A673 (cell line): ENCODE measurements at regions of chr13 and their contacts with region 1.

Region 1: DNA sequence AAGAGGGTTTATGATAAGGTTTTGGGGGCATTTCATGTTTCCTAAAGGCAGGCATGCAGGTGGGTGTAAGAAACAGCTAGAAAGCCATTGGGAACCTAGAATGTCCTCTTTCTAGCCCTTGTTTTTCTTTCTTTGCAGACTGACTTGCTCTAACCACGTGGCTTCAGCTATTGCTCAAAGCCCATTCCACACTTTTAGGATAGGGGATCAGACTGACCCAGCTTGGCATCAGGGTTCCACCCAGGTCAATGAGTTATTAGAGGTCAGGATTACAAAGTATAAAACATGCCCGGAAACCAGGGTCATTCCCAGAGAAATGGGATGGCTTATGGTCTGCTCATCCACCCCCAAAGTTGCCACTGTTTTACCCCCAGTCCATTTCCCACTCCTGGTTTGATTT is 16.8 kb downstream of the PHF11 start:
- DNase-seq: no peak
- H3K4me3 ChIP-seq: no peak overlapping the region
- H3K27ac ChIP-seq: no peak overlapping the region
- H3K4me1 ChIP-seq: no peaks in the 10 kb centered on the region
- H3K27me3 ChIP-seq: no peaks in the 10 kb centered on the region
- CTCF ChIP-seq: no peak

Region 2: GRCh38 chr13:49374585-49375290 is 137.8 kb before region 1 on chr13:
- CTCF ChIA-PET with region 1: no interaction called
- POLR2A ChIA-PET with region 1: no interaction called
- intact Hi-C with region 1: no loop called
- DNase-seq: peak; percentile 34
- H3K4me3 ChIP-seq: no peak overlapping the region
- H3K27ac ChIP-seq: no peak overlapping the region
- H3K4me1 ChIP-seq: peaks cover 3% of the 10 kb centered on the region
- H3K27me3 ChIP-seq: no peaks in the 10 kb centered on the region
- CTCF ChIP-seq: no peak

Region 3: DNA sequence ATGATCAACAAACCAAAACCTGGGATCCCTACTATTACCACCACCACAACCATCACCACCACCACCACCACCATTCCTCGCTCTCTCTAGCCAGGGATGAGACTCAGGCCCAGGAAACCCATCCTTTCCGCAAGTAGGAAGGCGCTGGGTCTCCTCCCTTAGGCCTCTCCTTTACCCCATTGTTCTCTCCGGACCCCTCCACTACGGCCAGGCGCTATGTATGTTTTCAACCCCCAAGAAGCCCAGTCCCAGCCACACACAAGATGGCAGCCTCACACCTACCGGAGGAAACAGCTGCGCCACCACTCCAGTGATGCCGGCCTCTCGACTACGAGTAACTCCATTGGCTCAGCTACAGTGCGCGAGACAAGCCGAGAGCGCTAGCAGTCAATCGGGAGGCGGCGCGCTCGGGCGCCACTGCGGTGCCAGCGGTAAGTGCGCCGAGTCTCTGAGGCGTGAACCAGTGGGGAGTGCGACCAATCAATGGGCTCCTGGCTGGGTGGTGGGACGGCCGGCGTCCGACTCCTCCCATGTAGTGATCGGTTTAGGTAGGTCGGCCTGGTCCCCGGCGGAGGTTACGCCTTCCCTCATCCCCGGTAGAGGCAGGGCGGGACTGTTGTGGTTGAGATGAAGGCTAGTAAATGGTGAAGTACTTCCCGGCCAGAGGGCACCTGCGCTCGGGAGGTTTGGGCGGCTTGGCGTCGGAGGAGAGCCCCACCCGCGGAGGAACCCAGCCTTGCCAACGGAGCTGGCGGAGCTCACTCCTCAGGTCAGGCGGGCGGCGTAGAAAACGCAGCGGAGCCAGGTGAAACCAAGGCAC is 68.7 kb before region 1 on chr13 and contains the starts of genes CAB39L and SETDB2:
- CTCF ChIA-PET with region 1: no interaction called
- POLR2A ChIA-PET with region 1: interaction called, 14 read pairs
- intact Hi-C with region 1: no loop called
- DNase-seq: peak; percentile 99
- H3K4me3 ChIP-seq: peak within 1 kb of the TSS; percentile 82
- H3K27ac ChIP-seq: peak within 1 kb of the TSS; percentile 75
- H3K4me1 ChIP-seq: peaks cover 5% of the 10 kb centered on the region
- H3K27me3 ChIP-seq: no peaks in the 10 kb centered on the region
- CTCF ChIP-seq: peak; percentile 51; the same call in 1 of the 2 replicates
- total RNA-seq, gene CAB39L: 3.6 and 4.0 TPM in 2 replicates
- total RNA-seq, gene SETDB2: 3.8 and 5.1 TPM in 2 replicates